GM10248 (cell line): ENCODE measurements at regions of chr2 and their contacts with region 1.

Region 1: DNA sequence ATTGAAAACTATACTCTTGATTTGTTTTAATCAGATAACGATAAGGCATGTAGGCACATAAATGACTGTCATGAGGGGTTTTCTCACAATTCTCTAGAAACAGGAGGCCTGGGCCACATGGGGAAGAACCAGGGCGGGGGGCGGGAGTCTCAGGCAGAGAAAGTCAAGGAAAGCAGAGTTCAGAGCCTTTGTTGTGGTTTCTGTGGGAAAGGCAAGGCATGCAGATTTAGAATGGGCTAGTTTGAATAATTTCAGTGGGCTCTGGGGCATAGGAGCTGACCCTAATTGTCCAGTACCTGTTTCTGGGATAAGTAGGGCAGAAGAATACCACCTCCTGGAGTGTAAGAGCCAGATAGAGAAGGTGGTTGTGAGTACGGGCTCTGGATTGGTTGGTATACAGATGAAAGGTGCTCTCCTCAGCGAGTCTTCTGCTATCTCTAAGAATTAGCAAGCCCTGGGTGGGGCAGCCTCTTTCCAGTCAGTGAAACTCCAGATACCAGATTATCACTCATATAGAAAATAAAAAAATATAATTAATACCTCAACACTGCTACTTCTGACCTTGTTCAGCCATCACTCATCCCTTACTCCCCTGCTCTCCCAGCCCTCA is 41.5 kb upstream of the CYRIA start:
- DNase-seq: no peak
- CTCF ChIP-seq: no peak

Region 2: GRCh38 chr2:16717477-16717876 is 10.4 kb after region 1 on chr2:
- CTCF ChIA-PET with region 1: interaction called, 32 read pairs
- POLR2A ChIA-PET with region 1: no interaction called
- DNase-seq: no peak
- CTCF ChIP-seq: no peak